ENCODE measurements at regions of chr6 and their contacts with region 1.

Region 1: DNA sequence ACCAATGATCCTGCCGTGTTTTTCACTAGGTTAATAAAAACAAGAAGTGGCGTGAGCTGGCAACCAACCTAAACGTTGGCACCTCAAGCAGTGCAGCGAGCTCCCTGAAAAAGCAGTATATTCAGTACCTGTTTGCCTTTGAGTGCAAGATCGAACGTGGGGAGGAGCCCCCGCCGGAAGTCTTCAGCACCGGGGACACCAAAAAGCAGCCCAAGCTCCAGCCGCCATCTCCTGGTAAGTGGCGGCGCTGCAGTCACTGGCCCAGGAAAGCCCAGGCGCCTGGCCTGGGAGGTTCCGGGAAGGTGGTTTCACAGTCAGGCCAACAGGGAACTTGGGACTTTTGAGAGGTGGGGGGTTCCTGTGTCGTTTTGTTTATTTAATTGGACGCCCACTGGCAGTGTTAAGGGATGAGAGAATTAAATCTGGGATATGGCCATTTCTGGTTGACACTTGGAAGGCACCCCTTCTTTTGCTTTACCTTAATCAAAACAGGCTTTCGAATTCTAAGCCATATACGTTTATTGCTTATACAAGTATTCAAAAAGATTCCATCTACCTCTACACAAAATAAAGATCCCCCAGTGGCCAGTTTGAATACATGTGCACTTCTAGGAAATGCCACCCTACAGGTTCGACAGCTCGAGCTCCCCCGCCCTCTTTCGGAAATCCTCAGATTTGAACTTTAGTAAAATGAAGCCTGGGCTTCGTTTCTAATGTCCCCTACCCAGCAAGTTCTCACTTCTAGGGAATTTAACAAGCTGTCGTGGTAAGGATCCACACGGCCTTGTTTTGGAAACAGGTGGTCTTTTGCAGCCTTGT is 138.9 kb downstream of the TMEM242 start:
- DNase-seq: peak; percentile 74 to 82
- ATAC-seq: peak; percentile 63 to 77 (median 75)
- H3K4me3 ChIP-seq: no peak overlapping the region
- H3K27ac ChIP-seq: peak overlapping the region; percentile 85
- H3K4me1 ChIP-seq: peaks cover 18% of the 10 kb centered on the region
- H3K27me3 ChIP-seq: no peaks in the 10 kb centered on the region
- CTCF ChIP-seq: peak; percentile 88

Region 2: DNA sequence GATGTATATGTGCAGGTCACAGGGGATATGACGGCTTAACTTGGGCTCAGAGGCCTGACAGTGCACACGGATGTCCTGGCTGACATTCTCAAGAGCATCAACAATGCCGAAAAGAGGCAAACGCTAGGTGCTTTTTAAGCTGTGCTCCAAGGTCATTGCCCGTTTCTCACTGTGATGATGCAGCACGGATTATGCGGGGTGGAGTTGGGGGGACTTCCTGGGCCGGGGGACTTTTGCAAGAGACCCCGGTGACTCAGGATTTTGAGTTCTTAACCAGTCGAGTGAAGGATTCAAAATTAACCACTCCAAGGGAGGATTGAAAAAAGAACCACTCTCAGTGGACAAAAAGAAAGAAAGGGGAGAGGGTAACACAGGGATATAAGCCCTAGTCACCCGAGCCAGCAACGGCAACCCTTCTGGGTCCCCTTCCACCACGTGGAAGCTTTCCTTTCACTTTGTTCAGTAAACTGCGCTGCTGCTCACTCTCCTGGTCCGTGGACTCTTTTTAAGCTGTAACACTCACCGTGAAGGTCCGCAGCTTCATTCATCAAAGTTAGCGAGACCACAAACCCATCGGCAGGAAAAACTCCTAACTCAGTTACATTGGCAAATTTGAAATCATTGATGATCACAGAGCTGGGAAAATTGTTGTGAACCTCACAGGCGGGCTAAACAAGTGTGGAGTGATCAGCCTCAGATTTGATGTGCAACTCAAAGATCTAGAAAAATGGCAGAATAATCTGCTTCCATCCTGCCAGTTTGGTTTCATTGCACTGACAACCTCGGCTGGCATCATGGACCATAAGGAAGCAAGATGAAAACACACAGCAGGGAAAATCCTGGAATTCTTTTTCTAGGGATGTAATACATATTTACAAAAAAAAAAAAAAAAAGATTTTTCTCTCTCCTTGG is 207.9 kb before region 1 on chr6:
- intact Hi-C with region 1: loop called in 1 of 2 experiments (anchors 10 kb)
- DNase-seq: no peak
- ATAC-seq: peak in 3 of 4 donors; percentile 39 to 52 (median 48)
- H3K4me3 ChIP-seq: peak overlapping the region; percentile 58
- H3K27ac ChIP-seq: peak overlapping the region; percentile 61
- H3K4me1 ChIP-seq: peaks cover 78% of the 10 kb centered on the region
- H3K27me3 ChIP-seq: no peaks in the 10 kb centered on the region
- CTCF ChIP-seq: no peak

Region 3: DNA sequence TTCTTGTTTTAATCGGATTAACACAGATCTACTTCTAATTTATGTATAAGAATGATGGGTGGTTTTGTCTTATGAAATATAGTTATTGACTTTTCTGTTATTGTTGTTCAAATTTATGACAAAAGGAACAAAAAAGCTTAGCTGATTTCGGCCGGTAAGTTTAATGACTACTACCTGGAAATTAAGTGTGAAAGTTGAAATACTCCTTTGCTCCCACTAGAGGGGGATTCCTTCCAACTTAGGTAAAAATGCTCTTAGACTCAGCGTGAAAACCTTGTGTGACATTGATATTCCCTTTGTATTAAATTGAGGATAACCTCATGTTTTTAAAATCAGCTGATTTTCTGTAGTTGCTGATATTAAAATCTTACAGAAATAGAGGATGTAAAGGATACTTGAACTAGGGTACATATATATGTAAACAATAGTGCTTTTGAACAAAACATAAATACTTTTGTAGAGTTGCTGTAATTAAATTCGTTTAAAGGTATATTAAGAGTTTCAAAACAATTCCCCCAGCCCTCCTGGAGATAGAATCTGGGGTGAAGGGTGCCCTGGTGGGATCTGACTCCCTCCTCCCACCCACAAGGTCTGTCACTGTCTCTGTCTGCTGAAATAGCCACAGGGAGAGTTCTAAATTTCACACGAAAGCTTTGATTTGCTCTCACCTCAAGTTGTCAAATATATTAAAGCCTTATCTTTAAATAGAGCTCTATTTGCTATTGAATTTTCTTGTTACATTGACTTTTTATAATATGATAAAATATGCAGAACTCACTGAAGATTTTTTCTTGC is 149.8 kb before region 1 on chr6:
- intact Hi-C with region 1: loop called (anchors 5 kb)
- DNase-seq: no peak
- ATAC-seq: peak in 2 of 4 donors; percentile 49 to 67
- H3K4me3 ChIP-seq: no peak overlapping the region
- H3K27ac ChIP-seq: no peak overlapping the region
- H3K4me1 ChIP-seq: peaks cover 44% of the 10 kb centered on the region
- H3K27me3 ChIP-seq: no peaks in the 10 kb centered on the region
- CTCF ChIP-seq: peak; percentile 59

Region 4: GRCh38 chr6:157143171-157143889 is 41.1 kb before region 1 on chr6:
- intact Hi-C with region 1: loop called (anchors 5 to 10 kb)
- DNase-seq: no peak
- ATAC-seq: peak in 1 of 4 donors; percentile 44
- H3K4me3 ChIP-seq: no peak overlapping the region
- H3K27ac ChIP-seq: peak overlapping the region; percentile 23
- H3K4me1 ChIP-seq: peaks cover 21% of the 10 kb centered on the region
- H3K27me3 ChIP-seq: no peaks in the 10 kb centered on the region
- CTCF ChIP-seq: no peak

Region 5: GRCh38 chr6:157148391-157149323 is 35.8 kb before region 1 on chr6:
- intact Hi-C with region 1: loop called in 1 of 2 experiments (anchors 5 kb)
- DNase-seq: peak; percentile 62 to 76
- ATAC-seq: peak; percentile 84 to 92 (median 87)
- H3K4me3 ChIP-seq: no peak overlapping the region
- H3K27ac ChIP-seq: peak overlapping the region; percentile 85
- H3K4me1 ChIP-seq: peaks cover 33% of the 10 kb centered on the region
- H3K27me3 ChIP-seq: no peaks in the 10 kb centered on the region
- CTCF ChIP-seq: no peak